GM12878 (cell line): ENCODE measurements at regions of chr7 and their contacts with region 1.

Region 1: DNA sequence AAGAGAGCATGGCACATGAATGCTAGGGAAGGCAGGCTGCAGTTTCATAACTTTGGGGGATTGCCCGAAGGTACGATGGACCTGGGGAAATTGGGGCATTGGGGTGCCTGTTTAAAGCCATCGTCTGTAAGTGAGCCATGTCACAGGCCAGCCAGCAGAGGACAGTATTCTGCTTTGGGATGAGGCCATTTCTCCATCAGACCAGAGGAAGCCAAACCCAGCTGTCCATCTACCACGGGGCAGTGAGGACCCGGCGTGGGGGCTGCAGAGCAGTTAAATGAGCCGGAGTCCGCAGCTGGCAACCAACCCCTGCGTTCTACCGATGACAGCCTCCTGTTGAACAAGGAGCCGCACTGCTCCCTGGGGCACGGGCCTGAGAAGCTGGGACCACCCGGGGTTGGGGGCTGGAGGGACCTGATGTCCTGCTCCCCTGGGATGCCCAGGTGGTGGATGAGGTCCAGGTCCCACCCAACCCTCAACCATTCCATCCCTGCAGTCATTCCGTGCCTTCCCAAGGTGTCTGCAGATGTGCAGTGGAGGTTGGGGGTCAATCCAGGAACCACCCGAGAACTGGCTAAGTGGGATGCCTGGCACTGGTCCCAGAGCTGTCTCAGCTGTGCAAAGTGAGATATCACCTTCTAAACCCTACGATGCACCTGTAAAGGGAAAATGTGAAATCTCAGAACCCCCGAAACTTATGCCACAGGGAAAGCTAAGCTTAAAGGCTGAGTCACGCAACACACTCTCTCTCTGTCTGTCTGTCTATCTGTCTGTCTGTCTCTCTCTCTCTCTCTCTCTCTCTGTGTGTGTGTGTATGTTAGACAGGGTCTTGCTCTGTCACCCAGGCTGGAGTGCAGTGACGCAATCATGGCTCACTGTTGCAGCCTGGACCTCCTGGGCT is 12.1 kb upstream of the RHBDD2 start:
- DNase-seq: no peak
- ATAC-seq: peak; percentile 98
- H3K4me3 ChIP-seq: no peak overlapping the region
- H3K27ac ChIP-seq: no peak overlapping the region
- H3K4me1 ChIP-seq: no peaks in the 10 kb centered on the region
- H3K27me3 ChIP-seq: no peaks in the 10 kb centered on the region
- CTCF ChIP-seq: peak; percentile 97 to 98 (median 97)
- EP300 ChIP-seq: no peak
- POLR2A ChIP-seq: no peak
- RAD21 ChIP-seq: peak; percentile 97

Region 2: GRCh38 chr7:75878769-75879611 is 12.3 kb after region 1 on chr7 and contains the start of gene RHBDD2:
- CTCF ChIA-PET with region 1: interaction called, 13 read pairs
- POLR2A ChIA-PET with region 1: interaction called, 3 read pairs
- RAD21 ChIA-PET with region 1: interaction called, 5 read pairs
- SMC1A ChIA-PET with region 1: interaction called, 5 read pairs
- in situ Hi-C with region 1: no loop called
- intact Hi-C with region 1: no loop called
- DNase-seq: peak; percentile 59
- ATAC-seq: peak; percentile 99
- H3K4me3 ChIP-seq: peak within 1 kb of the TSS; percentile 95
- H3K27ac ChIP-seq: peak within 1 kb of the TSS; percentile 76
- H3K4me1 ChIP-seq: peaks cover 8% of the 10 kb centered on the region
- H3K27me3 ChIP-seq: no peaks in the 10 kb centered on the region
- CTCF ChIP-seq: peak in 1 of 3 experiments; percentile 12; a peak in 1 of 6 replicates
- EP300 ChIP-seq: no peak
- POLR2A ChIP-seq: peak; percentile 98
- RAD21 ChIP-seq: no peak
- polyA plus RNA-seq, gene RHBDD2: 3.9 to 7.4 TPM

Region 3: DNA sequence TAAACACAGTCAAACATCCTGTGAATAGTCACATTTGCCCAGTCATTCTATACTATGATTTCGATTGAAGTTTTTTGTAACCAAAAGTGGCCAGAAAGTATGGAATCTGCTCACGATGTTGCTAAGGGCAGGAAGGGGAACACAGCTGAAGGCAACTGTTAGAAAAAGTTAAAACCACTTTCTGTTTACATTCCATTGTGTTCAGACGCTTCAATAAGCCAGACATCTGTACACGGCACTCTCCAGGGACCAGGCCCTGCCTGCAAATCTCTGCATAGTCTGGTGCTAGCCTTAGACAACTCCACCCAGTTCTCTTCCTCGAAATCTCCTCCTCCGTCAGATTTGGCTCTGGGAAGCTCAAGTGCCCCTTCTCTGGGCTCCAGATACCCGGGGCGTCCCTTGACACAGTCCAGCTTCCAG is 144.7 kb after region 1 on chr7:
- CTCF ChIA-PET with region 1: interaction called, 12 read pairs
- POLR2A ChIA-PET with region 1: no interaction called
- RAD21 ChIA-PET with region 1: interaction called, 4 read pairs
- SMC1A ChIA-PET with region 1: interaction called, 7 read pairs
- in situ Hi-C with region 1: no loop called
- intact Hi-C with region 1: no loop called
- DNase-seq: no peak
- ATAC-seq: no peak
- H3K4me3 ChIP-seq: no peak overlapping the region
- H3K27ac ChIP-seq: no peak overlapping the region
- H3K4me1 ChIP-seq: peaks cover 19% of the 10 kb centered on the region
- H3K27me3 ChIP-seq: no peaks in the 10 kb centered on the region
- CTCF ChIP-seq: no peak
- EP300 ChIP-seq: no peak
- POLR2A ChIP-seq: no peak
- RAD21 ChIP-seq: no peak